A549 (cell line): ENCODE measurements at regions of chr14 and their contacts with region 1.

Region 1: GRCh38 chr14:75906676-75907280 is 75.0 kb downstream of the TGFB3 start:
- DNase-seq: peak; percentile 48 to 54
- ATAC-seq: peak; percentile 54 to 71; a peak in 3 of 6 replicates
- H3K4me3 ChIP-seq: no peak overlapping the region
- H3K27ac ChIP-seq: no peak overlapping the region
- H3K4me1 ChIP-seq: no peaks in the 10 kb centered on the region
- CTCF ChIP-seq: peak; percentile 89
- EP300 ChIP-seq: no peak
- POLR2A ChIP-seq: no peak
- RAD21 ChIP-seq: peak; percentile 58 to 60

Region 2: DNA sequence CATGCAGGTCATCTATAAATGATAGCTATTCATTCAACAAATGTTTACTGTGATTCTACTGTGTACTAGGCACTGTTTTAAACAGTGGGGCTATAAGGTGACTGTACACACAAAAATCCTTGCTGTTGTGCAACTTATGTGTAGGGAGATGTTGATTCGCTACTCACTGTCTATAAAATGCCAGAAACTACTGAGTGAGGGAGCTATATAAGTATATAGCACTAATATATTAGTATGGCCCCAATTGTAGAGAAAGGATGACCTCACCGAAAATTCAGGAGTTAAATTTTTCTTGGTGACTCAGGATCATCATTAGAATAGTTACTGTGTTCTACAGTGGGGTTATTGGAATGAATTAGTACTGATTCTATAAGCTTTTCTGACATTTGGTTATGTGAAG is 42.4 kb before region 1 on chr14:
- CTCF ChIA-PET with region 1: interaction called, 10 read pairs
- POLR2A ChIA-PET with region 1: interaction called, 3 read pairs
- DNase-seq: no peak
- ATAC-seq: peak in 1 of 2 experiments; percentile 61; a peak in 2 of 6 replicates
- H3K4me3 ChIP-seq: no peak overlapping the region
- H3K27ac ChIP-seq: no peak overlapping the region
- H3K4me1 ChIP-seq: peaks cover 45% of the 10 kb centered on the region
- CTCF ChIP-seq: no peak
- EP300 ChIP-seq: no peak
- POLR2A ChIP-seq: no peak
- RAD21 ChIP-seq: no peak

Region 3: DNA sequence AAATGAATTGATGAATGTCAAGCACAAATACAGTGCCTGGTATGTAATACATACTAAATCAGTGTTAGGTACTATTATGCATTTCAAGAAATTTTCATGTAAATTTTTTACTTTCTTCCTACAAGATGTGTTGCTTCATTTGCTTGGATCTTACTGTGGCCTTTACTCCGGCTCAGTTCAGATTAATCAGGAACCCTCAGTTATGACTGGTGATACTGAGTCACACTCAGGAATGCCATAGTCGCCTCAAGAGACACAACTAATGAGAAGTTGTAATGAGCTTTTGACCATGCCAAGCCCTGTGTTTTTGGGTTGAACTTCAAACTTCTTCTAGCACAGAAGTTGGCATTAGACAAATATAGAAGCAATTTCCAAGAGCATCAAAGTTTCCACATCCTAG is 20.9 kb before region 1 on chr14:
- CTCF ChIA-PET with region 1: interaction called, 13 read pairs
- POLR2A ChIA-PET with region 1: no interaction called
- DNase-seq: no peak
- ATAC-seq: no peak
- H3K4me3 ChIP-seq: no peak overlapping the region
- H3K27ac ChIP-seq: no peak overlapping the region
- H3K4me1 ChIP-seq: no peaks in the 10 kb centered on the region
- CTCF ChIP-seq: no peak
- EP300 ChIP-seq: no peak
- POLR2A ChIP-seq: no peak
- RAD21 ChIP-seq: no peak

Region 4: DNA sequence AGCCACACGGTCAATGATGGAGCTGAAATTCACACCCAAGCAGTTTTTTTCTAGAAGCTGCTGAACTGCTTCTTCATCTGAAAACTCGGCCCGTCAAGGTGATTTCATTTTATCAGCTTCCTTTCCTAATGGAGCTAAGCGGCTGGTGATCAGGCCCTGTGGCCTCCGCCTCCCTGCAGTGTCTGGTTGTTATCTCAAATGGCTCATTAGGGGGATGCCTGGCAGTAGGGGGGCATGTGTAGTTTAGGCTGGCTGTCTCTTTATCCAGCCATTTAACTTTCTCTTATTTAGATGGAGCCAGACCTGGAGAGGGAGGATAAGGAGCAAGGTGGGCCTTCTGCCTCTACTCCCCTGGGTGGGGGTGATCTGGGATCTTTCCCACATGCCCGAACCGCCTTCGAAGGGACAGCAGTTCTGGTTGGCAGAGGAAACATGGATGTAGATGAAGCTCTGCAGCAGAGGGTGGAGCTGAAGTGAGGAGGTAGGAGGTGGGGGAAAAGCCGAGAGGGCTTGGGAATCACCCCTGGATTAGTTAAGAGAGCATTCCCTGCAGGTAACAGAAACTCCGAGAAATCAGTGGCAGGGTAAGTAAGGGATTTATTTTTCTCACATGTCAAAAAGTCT is 10.7 kb after region 1 on chr14:
- CTCF ChIA-PET with region 1: interaction called, 28 read pairs
- POLR2A ChIA-PET with region 1: no interaction called
- DNase-seq: no peak
- ATAC-seq: no peak
- H3K4me3 ChIP-seq: no peak overlapping the region
- H3K27ac ChIP-seq: no peak overlapping the region
- H3K4me1 ChIP-seq: no peaks in the 10 kb centered on the region
- CTCF ChIP-seq: no peak
- EP300 ChIP-seq: no peak
- POLR2A ChIP-seq: no peak
- RAD21 ChIP-seq: no peak

Region 5: GRCh38 chr14:75941030-75941429 is 34.3 kb after region 1 on chr14:
- CTCF ChIA-PET with region 1: interaction called, 12 read pairs
- POLR2A ChIA-PET with region 1: no interaction called
- DNase-seq: no peak
- ATAC-seq: no peak
- H3K4me3 ChIP-seq: no peak overlapping the region
- H3K27ac ChIP-seq: no peak overlapping the region
- H3K4me1 ChIP-seq: no peaks in the 10 kb centered on the region
- CTCF ChIP-seq: no peak
- EP300 ChIP-seq: no peak
- POLR2A ChIP-seq: no peak
- RAD21 ChIP-seq: no peak